ENCODE measurements at regions of chr6 and their contacts with region 1.

Region 1: DNA sequence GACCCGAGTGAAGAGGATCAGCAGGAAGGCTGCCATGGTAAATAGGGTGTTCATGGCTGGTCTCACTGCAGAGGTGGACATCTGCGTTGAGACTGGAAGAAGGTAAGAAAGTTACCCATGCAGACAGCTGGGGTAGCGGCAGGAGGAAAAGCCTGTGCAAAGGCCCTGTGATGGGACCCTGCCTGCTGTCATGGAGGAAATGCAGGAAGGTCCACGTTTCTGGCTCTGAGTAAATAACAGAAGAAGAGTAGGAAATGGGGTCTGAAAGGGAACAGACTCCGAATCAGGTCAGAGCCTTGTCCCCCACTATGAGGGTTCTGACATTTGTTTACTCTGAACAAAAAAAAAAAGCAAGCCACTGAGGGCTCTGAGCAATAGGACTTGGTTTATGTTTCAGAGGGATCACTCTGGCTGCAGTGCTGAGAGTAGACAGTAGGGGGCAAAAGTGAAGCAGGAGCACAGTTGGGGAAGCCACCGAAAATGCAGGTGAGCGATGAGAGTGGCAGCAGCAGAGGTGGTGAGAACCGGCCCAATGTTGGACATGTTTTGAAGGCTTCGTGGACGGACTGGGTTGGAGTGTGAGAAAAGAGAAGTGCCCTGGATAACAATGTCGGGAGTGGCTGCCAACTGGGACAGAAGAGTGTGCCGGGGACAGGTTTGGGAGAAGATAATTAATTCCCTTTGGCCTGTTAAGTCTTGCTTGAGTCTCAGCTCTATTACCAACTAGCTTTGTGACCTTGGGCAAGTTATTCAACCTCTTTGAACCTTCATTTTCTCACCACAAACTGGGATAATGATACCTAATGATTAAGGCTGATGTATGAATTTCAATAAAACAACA is 57.9 kb upstream of the MAP7 start:
- DNase-seq: peak; percentile 61
- H3K4me3 ChIP-seq: no peak overlapping the region
- H3K27ac ChIP-seq: no peak overlapping the region
- H3K4me1 ChIP-seq: peaks cover 43% of the 10 kb centered on the region
- H3K27me3 ChIP-seq: no peaks in the 10 kb centered on the region
- CTCF ChIP-seq: peak; percentile 83 to 85
- POLR2A ChIP-seq: no peak

Region 2: GRCh38 chr6:136550330-136551071 is 57.7 kb before region 1 on chr6 and contains the start of gene MAP7:
- CTCF ChIA-PET with region 1: no interaction called
- POLR2A ChIA-PET with region 1: no interaction called
- dilution Hi-C with region 1: no loop called
- intact Hi-C with region 1: loop called (anchors 1 kb)
- DNase-seq: peak; percentile 30
- H3K4me3 ChIP-seq: peak within 1 kb of the TSS; percentile 37 to 72 (median 46)
- H3K27ac ChIP-seq: no peak within 1 kb of the TSS
- H3K4me1 ChIP-seq: peaks cover 13% of the 10 kb centered on the region
- H3K27me3 ChIP-seq: peaks cover 27 to 36% of the 10 kb centered on the region in 2 experiments
- CTCF ChIP-seq: peak; percentile 56 to 83
- POLR2A ChIP-seq: no peak
- total RNA-seq, gene MAP7: 0.30 and 0.42 TPM in 2 replicates

Region 3: GRCh38 chr6:136582711-136583471 is 25.3 kb before region 1 on chr6:
- CTCF ChIA-PET with region 1: interaction called, 4 read pairs
- POLR2A ChIA-PET with region 1: no interaction called
- dilution Hi-C with region 1: no loop called
- intact Hi-C with region 1: loop called (anchors 1 kb)
- DNase-seq: peak; percentile 77
- H3K4me3 ChIP-seq: no peak overlapping the region
- H3K27ac ChIP-seq: peak overlapping the region; percentile 89
- H3K4me1 ChIP-seq: peaks cover 4% of the 10 kb centered on the region
- H3K27me3 ChIP-seq: no peaks in the 10 kb centered on the region
- CTCF ChIP-seq: peak; percentile 26 to 31
- POLR2A ChIP-seq: no peak

Region 4: GRCh38 chr6:136593748-136594490 is 14.2 kb before region 1 on chr6:
- CTCF ChIA-PET with region 1: interaction called, 12 read pairs
- POLR2A ChIA-PET with region 1: interaction called, 5 read pairs
- dilution Hi-C with region 1: no loop called
- intact Hi-C with region 1: loop called (anchors 1 kb)
- DNase-seq: peak; percentile 97
- H3K4me3 ChIP-seq: peak overlapping the region in 1 of 3 experiments; percentile 31
- H3K27ac ChIP-seq: peak overlapping the region; percentile 88
- H3K4me1 ChIP-seq: peaks cover 20% of the 10 kb centered on the region
- H3K27me3 ChIP-seq: no peaks in the 10 kb centered on the region
- CTCF ChIP-seq: no peak
- POLR2A ChIP-seq: no peak

Region 5: DNA sequence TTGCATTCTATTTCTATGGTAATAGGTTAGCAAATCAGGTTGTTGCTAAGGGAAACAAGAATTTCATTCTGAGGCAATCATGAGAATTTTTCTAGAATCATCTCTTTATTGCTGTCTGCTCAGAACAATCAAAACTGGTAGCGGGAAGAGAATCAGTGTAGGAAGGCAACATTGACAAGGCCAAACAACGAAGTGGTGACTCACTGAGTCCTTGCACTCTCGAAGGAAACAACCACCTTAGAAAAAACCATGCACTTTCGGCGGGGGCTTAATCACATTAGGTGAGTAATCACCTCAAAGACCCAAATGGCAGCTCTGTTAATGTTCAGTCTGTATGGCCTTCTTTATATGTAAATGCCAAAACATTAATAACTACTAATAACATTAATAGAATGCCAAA is 20.8 kb after region 1 on chr6:
- CTCF ChIA-PET with region 1: interaction called, 6 read pairs
- POLR2A ChIA-PET with region 1: no interaction called
- dilution Hi-C with region 1: no loop called
- intact Hi-C with region 1: loop called (anchors 2 kb)
- DNase-seq: peak; percentile 36
- H3K4me3 ChIP-seq: no peak overlapping the region
- H3K27ac ChIP-seq: no peak overlapping the region
- H3K4me1 ChIP-seq: no peaks in the 10 kb centered on the region
- H3K27me3 ChIP-seq: no peaks in the 10 kb centered on the region
- CTCF ChIP-seq: no peak
- POLR2A ChIP-seq: no peak

Region 6: DNA sequence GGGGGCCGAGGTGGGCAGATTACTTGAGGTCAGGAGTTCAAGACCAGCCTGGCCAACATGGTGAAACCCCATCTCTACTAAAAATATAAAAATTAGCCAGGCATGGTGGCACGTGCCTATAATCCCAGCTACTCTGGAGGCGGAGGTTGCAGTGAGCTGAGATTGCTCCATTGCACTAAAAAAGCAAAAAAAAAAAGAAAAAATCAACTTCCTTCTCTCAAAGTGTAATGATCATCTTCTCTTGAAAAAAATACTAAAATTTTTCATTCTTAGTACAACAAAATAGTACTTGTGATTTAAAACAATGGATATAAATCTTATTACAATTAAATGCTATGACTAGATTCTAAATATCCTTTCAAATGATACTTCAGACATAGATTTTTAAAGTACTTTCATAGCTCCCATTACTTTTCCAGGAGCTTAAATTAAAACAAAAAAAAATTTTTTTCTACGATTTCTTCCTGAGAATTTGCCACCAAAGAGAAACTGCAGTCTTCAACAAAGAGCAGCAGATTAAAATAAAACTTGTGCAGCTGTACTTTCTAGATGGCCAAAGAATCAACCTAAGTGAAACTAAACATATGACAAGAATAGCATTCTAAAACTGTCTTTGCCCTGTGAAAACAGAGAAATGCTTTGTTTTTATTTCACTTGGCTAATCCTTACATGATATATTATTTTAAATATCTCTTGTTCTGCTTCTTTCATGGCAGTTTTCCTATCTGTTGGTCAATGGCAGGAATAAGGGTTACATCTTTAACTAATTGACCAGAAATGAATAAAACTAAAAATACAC is 109.0 kb after region 1 on chr6:
- CTCF ChIA-PET with region 1: no interaction called
- POLR2A ChIA-PET with region 1: no interaction called
- dilution Hi-C with region 1: no loop called
- intact Hi-C with region 1: loop called (anchors 1 kb)
- DNase-seq: no peak
- H3K4me3 ChIP-seq: peak overlapping the region in 2 of 3 experiments; percentile 9 to 36
- H3K27ac ChIP-seq: peak overlapping the region; percentile 45
- H3K4me1 ChIP-seq: peaks cover 28% of the 10 kb centered on the region
- H3K27me3 ChIP-seq: no peaks in the 10 kb centered on the region
- CTCF ChIP-seq: no peak
- POLR2A ChIP-seq: no peak

Region 7: GRCh38 chr6:136822376-136823127 is 214.4 kb after region 1 on chr6 and contains the start of gene PEX7:
- CTCF ChIA-PET with region 1: no interaction called
- POLR2A ChIA-PET with region 1: no interaction called
- dilution Hi-C with region 1: no loop called
- intact Hi-C with region 1: loop called (anchors 1 kb)
- DNase-seq: peak; percentile 92
- H3K4me3 ChIP-seq: peak within 1 kb of the TSS; percentile 35 to 89 (median 65)
- H3K27ac ChIP-seq: peak within 1 kb of the TSS; percentile 52
- H3K4me1 ChIP-seq: peaks cover 10% of the 10 kb centered on the region
- H3K27me3 ChIP-seq: no peaks in the 10 kb centered on the region
- CTCF ChIP-seq: peak; percentile 67 to 86
- POLR2A ChIP-seq: peak; percentile 73
- total RNA-seq, gene PEX7: 3.5 and 3.7 TPM in 2 replicates